ENCODE measurements at regions of chr9 and their contacts with region 1.

Region 1: GRCh38 chr9:114108016-114108833 is 9.1 kb upstream of the KIF12 start:
- DNase-seq: peak; percentile 74
- H3K4me3 ChIP-seq: no peak overlapping the region
- H3K27ac ChIP-seq: no peak overlapping the region
- H3K4me1 ChIP-seq: peaks cover 10% of the 10 kb centered on the region
- H3K27me3 ChIP-seq: peaks cover 3 to 7% of the 10 kb centered on the region in 2 experiments
- CTCF ChIP-seq: peak; percentile 97 to 99
- POLR2A ChIP-seq: no peak

Region 2: DNA sequence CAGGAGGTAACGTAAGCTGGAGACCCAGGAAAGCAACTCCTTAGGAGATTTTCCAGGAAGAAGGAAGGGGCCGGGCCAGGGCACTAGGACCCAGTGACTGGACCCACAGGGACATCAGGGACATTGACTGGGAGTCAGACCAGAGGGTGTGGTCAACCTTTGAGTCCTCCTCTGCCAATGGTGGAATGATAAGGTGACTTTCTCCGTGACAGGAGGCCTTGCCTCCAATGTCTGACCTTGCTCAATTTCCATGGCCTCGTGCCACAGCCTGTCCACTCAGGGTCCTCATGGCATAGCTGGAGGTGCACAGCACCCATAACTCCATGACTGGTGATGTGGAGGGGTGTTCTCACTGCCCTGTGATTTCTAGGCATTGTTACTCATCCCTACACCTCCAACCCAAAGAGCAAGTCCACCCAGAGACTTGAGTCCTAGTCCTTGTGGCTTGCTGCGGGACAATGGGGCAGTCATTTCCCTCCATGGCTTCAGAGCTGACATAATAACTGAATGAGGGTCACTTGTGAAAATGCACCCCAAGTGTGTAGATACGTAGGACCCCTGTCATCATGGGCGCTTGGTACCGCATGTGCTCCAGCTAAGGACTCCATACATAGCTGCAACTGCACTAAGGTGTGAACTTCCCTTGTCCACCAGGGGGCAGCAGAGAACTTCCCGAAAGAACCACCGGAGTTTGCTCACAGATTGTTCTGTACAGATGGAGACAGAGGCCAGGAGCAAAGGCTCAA is 26.0 kb before region 1 on chr9:
- CTCF ChIA-PET with region 1: interaction called, 159 read pairs
- POLR2A ChIA-PET with region 1: no interaction called
- dilution Hi-C with region 1: no loop called
- intact Hi-C with region 1: loop called (anchors 1 kb)
- DNase-seq: peak; percentile 82
- H3K4me3 ChIP-seq: no peak overlapping the region
- H3K27ac ChIP-seq: no peak overlapping the region
- H3K4me1 ChIP-seq: no peaks in the 10 kb centered on the region
- H3K27me3 ChIP-seq: peaks cover 5 to 15% of the 10 kb centered on the region in 2 experiments
- CTCF ChIP-seq: peak; percentile 91 to 92
- POLR2A ChIP-seq: no peak

Region 3: DNA sequence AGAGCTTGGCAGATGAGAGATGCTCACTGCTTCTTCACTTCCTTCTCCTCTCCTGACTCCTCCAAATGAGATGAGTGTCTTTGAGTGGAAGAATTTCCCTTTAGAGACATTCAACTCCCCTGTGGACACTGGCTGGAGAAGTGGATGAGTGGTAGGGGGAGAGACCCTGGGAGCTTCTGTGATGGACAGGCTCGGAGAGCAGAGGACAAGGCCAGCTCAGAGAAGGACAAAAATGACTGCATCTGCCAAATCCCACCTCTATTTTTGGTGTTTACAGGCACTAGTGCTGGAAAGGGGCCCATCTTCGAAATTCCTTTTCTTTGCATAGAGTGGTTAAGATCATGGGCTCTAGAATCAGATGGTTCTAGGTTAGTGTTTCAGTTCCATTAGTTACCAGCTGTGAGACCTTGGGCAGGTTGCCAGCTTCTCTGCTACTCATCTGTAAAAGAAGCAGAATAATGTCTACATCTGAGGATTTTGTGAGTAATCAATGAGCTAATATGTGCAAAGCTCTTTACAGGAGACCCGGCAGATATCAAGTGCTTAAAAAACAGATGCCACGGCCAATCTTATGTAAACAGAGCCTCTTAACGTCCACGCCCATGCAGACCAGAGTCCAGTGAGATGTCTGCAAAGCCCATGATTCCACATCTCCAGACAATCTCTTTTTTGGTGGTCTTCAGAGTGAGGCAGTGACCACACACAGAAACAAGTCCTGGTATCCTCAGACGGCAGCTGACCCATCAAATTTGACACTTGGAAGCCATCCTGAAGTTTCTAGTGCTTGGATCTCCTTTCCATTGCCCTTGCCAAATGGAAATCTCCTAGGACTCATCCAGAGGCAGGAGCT is 33.6 kb after region 1 on chr9:
- CTCF ChIA-PET with region 1: interaction called, 28 read pairs
- POLR2A ChIA-PET with region 1: no interaction called
- dilution Hi-C with region 1: no loop called
- intact Hi-C with region 1: no loop called
- DNase-seq: no peak
- H3K4me3 ChIP-seq: no peak overlapping the region
- H3K27ac ChIP-seq: no peak overlapping the region
- H3K4me1 ChIP-seq: no peaks in the 10 kb centered on the region
- H3K27me3 ChIP-seq: peaks cover 26 to 33% of the 10 kb centered on the region in 2 experiments
- CTCF ChIP-seq: no peak
- POLR2A ChIP-seq: no peak

Region 4: DNA sequence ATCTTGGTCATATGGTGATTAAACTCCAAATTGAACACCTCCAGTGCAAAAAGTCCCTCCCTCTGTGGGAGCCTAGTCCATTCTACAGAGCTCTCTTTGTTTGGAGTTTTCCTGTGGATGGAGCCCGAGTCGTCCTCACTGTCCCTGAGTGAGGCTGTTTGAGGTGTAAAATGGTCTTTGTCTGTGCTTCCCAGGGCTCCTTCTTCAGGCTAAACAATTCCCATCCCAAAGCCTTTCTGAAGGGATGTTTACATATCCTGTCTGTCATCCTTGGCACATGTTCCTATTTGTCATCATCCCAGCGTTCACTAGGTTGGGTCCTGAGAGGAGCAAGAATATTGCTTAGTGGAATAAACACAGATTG is 116.0 kb after region 1 on chr9:
- CTCF ChIA-PET with region 1: interaction called, 12 read pairs
- POLR2A ChIA-PET with region 1: no interaction called
- dilution Hi-C with region 1: no loop called
- intact Hi-C with region 1: no loop called
- DNase-seq: peak; percentile 51
- H3K4me3 ChIP-seq: no peak overlapping the region
- H3K27ac ChIP-seq: peak overlapping the region; percentile 91
- H3K4me1 ChIP-seq: peaks cover 69% of the 10 kb centered on the region
- H3K27me3 ChIP-seq: no peaks in the 10 kb centered on the region
- CTCF ChIP-seq: no peak
- POLR2A ChIP-seq: peak; percentile 26

Region 5: DNA sequence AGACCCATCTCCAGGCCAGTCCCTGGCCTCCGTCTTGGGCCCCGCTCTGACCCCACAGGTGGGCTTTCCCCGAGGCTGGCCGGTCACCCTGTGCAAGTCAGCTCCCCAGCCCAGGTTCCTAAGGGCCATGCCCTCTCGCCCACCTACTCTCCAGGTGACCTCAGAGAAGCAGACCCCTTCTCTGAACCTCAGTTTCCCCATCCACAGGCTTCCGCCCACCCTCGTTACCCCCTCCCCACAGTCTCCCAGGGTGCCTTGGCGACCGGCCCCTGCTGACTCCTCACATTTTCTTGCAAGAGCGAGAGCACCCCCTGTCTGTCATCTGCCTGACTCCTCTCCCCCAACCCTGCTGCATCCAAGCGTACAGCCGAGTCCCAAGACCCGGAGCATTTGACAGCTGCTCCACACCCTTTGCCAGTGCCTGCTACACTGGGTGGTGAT is 163.4 kb after region 1 on chr9:
- CTCF ChIA-PET with region 1: interaction called, 83 read pairs
- POLR2A ChIA-PET with region 1: no interaction called
- dilution Hi-C with region 1: no loop called
- intact Hi-C with region 1: no loop called
- DNase-seq: peak; percentile 58
- H3K4me3 ChIP-seq: no peak overlapping the region
- H3K27ac ChIP-seq: no peak overlapping the region
- H3K4me1 ChIP-seq: no peaks in the 10 kb centered on the region
- H3K27me3 ChIP-seq: no peaks in the 10 kb centered on the region
- CTCF ChIP-seq: peak; percentile 23 to 75
- POLR2A ChIP-seq: no peak

Region 6: GRCh38 chr9:114291064-114291474 is 182.8 kb after region 1 on chr9:
- CTCF ChIA-PET with region 1: interaction called, 277 read pairs
- POLR2A ChIA-PET with region 1: interaction called, 3 read pairs
- dilution Hi-C with region 1: no loop called
- intact Hi-C with region 1: loop called (anchors 1 kb)
- DNase-seq: peak; percentile 72
- H3K4me3 ChIP-seq: no peak overlapping the region
- H3K27ac ChIP-seq: no peak overlapping the region
- H3K4me1 ChIP-seq: no peaks in the 10 kb centered on the region
- H3K27me3 ChIP-seq: no peaks in the 10 kb centered on the region
- CTCF ChIP-seq: peak; percentile 77 to 79
- POLR2A ChIP-seq: no peak

Region 7: DNA sequence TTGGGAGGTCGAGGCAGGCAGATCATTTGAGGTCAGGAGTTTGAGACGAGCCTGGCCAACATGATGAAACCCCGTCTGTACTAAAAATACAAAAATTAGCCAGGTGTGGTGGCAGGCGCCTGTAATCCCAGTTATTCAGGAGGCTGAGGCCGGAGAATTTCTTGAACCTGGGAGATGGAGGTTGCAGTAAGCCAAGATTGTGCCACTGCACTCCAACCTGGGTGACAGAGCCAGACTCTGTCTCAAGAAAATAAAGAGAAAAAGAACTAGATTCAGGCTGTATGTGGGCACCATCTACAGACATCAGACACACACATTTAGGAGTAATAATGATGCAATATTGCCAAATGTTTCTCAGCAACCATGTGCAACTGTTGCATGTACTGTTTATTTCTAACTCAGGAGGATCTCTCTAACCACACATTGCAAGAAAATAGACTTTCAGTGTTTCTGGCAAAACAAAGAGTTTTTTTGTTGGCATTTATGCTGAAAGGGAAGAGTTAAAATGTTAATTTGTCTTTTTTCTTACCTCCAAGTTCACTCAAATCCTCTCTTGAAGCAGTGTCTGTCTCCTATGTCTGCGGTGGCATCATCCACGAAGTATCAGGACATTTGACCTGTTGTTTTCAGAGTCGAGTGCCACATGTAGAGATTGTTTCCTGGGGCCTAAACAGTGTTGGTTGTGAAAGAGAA is 209.6 kb after region 1 on chr9:
- CTCF ChIA-PET with region 1: interaction called, 12 read pairs
- POLR2A ChIA-PET with region 1: no interaction called
- dilution Hi-C with region 1: no loop called
- intact Hi-C with region 1: no loop called
- DNase-seq: no peak
- H3K4me3 ChIP-seq: no peak overlapping the region
- H3K27ac ChIP-seq: no peak overlapping the region
- H3K4me1 ChIP-seq: no peaks in the 10 kb centered on the region
- H3K27me3 ChIP-seq: peaks cover 0 to 5% of the 10 kb centered on the region in 2 experiments
- CTCF ChIP-seq: no peak
- POLR2A ChIP-seq: no peak

Region 8: DNA sequence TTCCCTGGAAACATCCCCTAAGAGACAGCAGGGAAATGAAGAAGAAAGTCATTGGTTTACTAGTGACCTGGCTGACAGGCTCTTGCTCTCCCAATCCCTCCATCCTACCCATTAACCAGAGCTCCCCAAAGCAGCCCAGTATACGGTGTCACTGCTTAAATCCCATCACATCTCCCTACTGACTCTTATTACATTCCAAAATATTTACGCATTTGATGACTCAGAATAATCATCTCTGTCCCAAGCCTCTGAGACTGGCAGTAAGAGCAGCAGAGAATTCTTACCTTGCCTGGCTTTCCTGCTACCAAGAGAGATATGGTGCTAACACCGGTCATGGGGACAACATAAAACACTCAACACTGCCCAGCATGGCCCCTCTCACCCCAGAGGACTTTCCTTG is 417.3 kb after region 1 on chr9:
- CTCF ChIA-PET with region 1: no interaction called
- POLR2A ChIA-PET with region 1: no interaction called
- dilution Hi-C with region 1: no loop called
- intact Hi-C with region 1: no loop called
- DNase-seq: no peak
- H3K4me3 ChIP-seq: no peak overlapping the region
- H3K27ac ChIP-seq: no peak overlapping the region
- H3K4me1 ChIP-seq: no peaks in the 10 kb centered on the region
- H3K27me3 ChIP-seq: peaks cover 9 to 16% of the 10 kb centered on the region in 2 experiments
- CTCF ChIP-seq: no peak
- POLR2A ChIP-seq: no peak